Posterior vena cava (tissue), 2 donors: ENCODE measurements at regions of chr18 and their contacts with region 1.

Region 1: GRCh38 chr18:40404284-40404683 is 1550.8 kb upstream of the PIK3C3 start:
- DNase-seq: no peak

Region 2: GRCh38 chr18:38644875-38645641 is 1759.2 kb before region 1 on chr18:
- intact Hi-C with region 1: no loop called
- DNase-seq: no peak

Region 3: GRCh38 chr18:39611381-39612100 is 792.7 kb before region 1 on chr18:
- intact Hi-C with region 1: no loop called
- DNase-seq: no peak

Region 4: GRCh38 chr18:40371673-40372072 is 32.6 kb before region 1 on chr18:
- intact Hi-C with region 1: loop called in 1 of 2 experiments (anchors 1 kb)
- DNase-seq: no peak

Region 5: DNA sequence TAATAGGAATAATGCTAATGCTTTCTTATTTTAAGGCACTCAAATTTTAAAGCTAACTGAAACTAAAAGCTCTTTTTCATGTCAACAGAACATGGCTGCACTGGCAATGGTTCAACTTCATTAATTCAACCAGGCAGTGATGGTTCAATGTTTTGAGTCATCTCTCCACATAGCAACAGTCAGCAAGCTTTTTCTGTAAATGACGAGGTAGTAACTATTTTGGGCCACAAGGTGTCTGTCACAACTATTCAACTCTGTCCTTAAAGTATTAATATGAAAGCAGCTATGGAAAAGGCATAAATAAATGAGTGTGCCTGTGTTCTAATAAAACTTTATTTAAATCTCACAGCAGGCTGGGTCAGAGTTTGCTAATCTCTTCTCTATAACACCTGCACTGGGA is 125.2 kb after region 1 on chr18:
- intact Hi-C with region 1: no loop called
- DNase-seq: no peak

Region 6: GRCh38 chr18:40877096-40877495 is 472.8 kb after region 1 on chr18:
- intact Hi-C with region 1: no loop called
- DNase-seq: no peak